ENCODE measurements at regions of chr7 and their contacts with region 1.

Region 1: DNA sequence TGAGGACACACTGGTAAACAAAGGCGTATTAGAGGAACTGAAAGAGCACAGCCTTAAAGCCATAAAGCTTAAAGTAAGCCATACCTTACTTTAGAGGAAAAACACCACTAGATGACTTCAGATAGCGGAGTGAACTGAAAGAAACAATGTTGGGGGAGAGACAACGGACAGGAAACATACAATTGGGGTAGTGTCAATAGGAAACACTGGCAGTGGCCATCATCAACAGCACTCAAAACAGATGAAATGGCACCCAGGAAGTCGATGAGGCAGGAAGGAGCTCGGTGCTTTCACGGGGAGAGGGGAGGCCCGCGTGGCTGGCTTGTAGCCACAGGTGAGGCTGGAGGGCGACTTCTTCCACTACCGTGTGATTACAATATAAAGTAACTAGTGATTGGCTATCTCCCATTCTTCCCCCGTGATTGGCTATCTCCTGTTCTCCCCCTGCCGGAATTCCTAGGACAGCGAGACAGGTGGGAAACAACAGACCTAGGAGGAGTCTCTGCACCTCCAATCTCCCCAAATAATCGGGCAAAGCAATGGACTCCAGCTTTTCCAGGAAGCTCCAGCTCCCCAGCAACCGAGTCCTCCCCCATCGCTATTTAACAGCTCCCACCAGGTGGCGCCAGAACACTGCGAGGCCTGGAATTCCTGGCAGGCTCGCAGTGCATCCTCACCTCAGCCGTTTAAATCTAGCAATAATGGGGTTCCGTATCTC is 2.4 kb upstream of the TAS2R38 start:
- DNase-seq: peak; percentile 85
- H3K4me3 Mint-ChIP-seq: peak overlapping the region; percentile 60
- H3K27ac Mint-ChIP-seq: peak overlapping the region; percentile 9
- H3K4me1 Mint-ChIP-seq: no peaks in the 10 kb centered on the region
- H3K27me3 Mint-ChIP-seq: no peaks in the 10 kb centered on the region
- CTCF ChIP-seq: peak; percentile 92

Region 2: DNA sequence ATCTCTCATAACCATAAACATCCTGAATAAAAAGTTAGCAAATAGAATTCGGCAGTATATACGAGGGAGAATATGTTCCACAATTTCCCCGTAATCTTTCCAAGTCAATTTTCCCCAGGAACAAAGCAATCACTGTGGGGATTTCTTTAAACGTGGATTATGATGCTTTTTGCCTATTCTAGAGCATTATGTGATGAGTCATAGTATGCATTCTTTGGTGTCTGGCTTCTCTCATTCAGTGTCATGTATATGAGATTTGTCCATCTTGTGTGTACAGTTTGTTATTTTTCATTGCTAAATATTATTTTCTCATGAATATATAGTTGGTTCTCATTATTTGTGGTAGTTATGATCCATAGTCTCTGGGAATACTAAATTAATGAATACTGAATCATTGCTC is 69.7 kb before region 1 on chr7:
- CTCF ChIA-PET with region 1: no interaction called
- POLR2A ChIA-PET with region 1: no interaction called
- intact Hi-C with region 1: no loop called
- DNase-seq: no peak
- H3K4me3 Mint-ChIP-seq: no peak overlapping the region
- H3K27ac Mint-ChIP-seq: no peak overlapping the region
- H3K4me1 Mint-ChIP-seq: no peaks in the 10 kb centered on the region
- H3K27me3 Mint-ChIP-seq: no peaks in the 10 kb centered on the region
- CTCF ChIP-seq: no peak

Region 3: DNA sequence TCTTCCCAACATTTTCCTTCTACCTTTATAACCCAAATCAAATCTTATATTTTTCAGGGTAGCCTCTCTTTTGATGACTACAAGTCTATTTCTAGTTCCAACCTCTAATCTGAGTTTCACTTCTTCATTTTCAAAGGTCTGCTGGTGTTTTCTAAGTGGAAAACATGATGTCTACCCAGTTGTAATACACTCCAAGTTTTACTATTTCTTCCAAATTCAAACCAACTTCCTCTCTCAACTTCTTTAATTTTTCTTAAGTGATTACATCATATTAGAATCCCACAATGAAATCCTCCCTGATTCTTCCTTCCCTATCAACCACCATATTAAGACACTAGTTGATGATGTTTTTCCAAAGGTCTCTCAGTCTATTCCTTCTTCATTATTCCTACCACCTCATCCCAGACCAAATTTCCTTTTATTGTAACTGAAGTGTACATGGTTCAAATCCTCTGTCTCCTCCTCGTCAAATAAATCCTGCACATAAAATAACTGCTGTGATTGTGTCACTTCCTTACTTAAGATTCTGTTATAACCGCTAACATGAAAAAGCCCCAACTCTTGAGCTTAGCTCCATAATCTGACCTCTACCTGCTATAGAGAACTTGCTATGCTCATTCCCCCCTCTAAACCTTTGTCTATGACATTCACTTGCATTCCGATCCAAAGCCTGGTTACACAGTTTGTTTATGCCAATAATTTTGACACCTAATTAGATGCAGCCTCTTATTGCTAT is 15.1 kb before region 1 on chr7:
- CTCF ChIA-PET with region 1: interaction called, 53 read pairs
- POLR2A ChIA-PET with region 1: no interaction called
- intact Hi-C with region 1: no loop called
- DNase-seq: no peak
- H3K4me3 Mint-ChIP-seq: no peak overlapping the region
- H3K27ac Mint-ChIP-seq: no peak overlapping the region
- H3K4me1 Mint-ChIP-seq: no peaks in the 10 kb centered on the region
- H3K27me3 Mint-ChIP-seq: no peaks in the 10 kb centered on the region
- CTCF ChIP-seq: no peak

Region 4: GRCh38 chr7:142006577-142006976 is 30.6 kb after region 1 on chr7:
- CTCF ChIA-PET with region 1: interaction called, 30 read pairs
- POLR2A ChIA-PET with region 1: no interaction called
- intact Hi-C with region 1: no loop called
- DNase-seq: no peak
- H3K4me3 Mint-ChIP-seq: no peak overlapping the region
- H3K27ac Mint-ChIP-seq: no peak overlapping the region
- H3K4me1 Mint-ChIP-seq: peaks cover under 1% of the 10 kb centered on the region
- H3K27me3 Mint-ChIP-seq: no peaks in the 10 kb centered on the region
- CTCF ChIP-seq: no peak

Region 5: GRCh38 chr7:142030294-142030693 is 54.3 kb after region 1 on chr7:
- CTCF ChIA-PET with region 1: interaction called, 108 read pairs
- POLR2A ChIA-PET with region 1: interaction called, 10 read pairs
- intact Hi-C with region 1: loop called (anchors 1 kb)
- DNase-seq: peak; percentile 56
- H3K4me3 Mint-ChIP-seq: no peak overlapping the region
- H3K27ac Mint-ChIP-seq: peak overlapping the region; percentile 3
- H3K4me1 Mint-ChIP-seq: peaks cover 24% of the 10 kb centered on the region
- H3K27me3 Mint-ChIP-seq: no peaks in the 10 kb centered on the region
- CTCF ChIP-seq: peak; percentile 35

Region 6: GRCh38 chr7:142181966-142182365 is 206.0 kb after region 1 on chr7:
- CTCF ChIA-PET with region 1: interaction called, 86 read pairs
- POLR2A ChIA-PET with region 1: no interaction called
- intact Hi-C with region 1: no loop called
- DNase-seq: no peak
- H3K4me3 Mint-ChIP-seq: no peak overlapping the region
- H3K27ac Mint-ChIP-seq: no peak overlapping the region
- H3K4me1 Mint-ChIP-seq: peaks cover 10% of the 10 kb centered on the region
- H3K27me3 Mint-ChIP-seq: no peaks in the 10 kb centered on the region
- CTCF ChIP-seq: no peak

Region 7: GRCh38 chr7:142301923-142302550 is 326.1 kb after region 1 on chr7:
- CTCF ChIA-PET with region 1: interaction called, 19 read pairs
- POLR2A ChIA-PET with region 1: interaction called, 4 read pairs
- intact Hi-C with region 1: loop called (anchors 1 kb)
- DNase-seq: peak; percentile 36
- H3K4me3 Mint-ChIP-seq: no peak overlapping the region
- H3K27ac Mint-ChIP-seq: no peak overlapping the region
- H3K4me1 Mint-ChIP-seq: no peaks in the 10 kb centered on the region
- H3K27me3 Mint-ChIP-seq: peaks cover 50% of the 10 kb centered on the region
- CTCF ChIP-seq: peak; percentile 54

Measured in MCF 10A (cell line).